Activated CD8-positive, alpha-beta memory T cell treated with anti-CD3 and anti-CD28 coated beads, Interleukin-2, amount 10 ng/mL, durations not matched to agents 7 days and 5 days (primary cell): ENCODE measurements at regions of chr11 and their contacts with region 1.

Region 1: DNA sequence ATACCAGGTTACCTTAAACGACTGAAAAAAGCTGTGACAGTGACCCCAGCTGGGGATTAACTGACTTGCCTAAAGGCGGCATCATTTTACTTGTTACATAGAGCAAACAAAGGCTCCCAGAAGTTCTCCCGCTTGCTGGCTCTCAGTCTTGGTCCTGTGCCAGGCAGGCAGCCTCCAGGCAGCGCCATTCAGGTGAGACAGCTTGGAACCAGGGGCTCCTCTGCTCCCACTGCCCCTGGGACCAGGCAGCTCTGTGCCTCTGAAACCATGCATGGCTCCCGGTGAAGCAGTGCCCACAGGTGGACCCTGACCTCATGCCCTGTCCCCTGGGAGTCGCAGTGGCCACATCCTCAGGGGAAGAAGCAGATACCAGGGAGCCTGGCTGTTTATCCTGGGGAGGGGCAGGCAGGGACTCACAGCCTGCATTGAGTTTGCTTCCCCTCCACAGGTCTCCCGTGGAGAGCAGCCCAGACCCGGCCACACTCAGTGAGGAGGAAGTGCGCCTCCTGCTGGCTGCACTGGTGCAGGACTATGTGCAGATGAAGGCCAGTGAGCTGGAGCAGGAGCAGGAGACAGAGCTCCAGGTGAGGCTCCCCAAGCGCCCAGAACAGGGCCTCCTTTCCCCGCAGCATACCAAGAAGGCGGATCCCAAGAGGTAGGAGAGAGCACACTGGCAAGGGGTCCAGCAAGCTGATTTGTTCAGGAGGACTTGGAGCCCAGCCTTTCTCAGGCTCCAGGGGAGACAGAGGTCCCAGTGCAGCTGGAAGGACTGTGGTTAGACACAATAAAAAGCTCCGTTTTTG is 15.6 kb upstream of the CYP2R1 start:
- DNase-seq: peak; percentile 89
- ATAC-seq: peak; percentile 58
- H3K4me3 Mint-ChIP-seq: no peak overlapping the region
- H3K27ac Mint-ChIP-seq: peak overlapping the region; percentile 69
- H3K4me1 Mint-ChIP-seq: peaks cover 50% of the 10 kb centered on the region
- H3K27me3 Mint-ChIP-seq: no peaks in the 10 kb centered on the region

Region 2: DNA sequence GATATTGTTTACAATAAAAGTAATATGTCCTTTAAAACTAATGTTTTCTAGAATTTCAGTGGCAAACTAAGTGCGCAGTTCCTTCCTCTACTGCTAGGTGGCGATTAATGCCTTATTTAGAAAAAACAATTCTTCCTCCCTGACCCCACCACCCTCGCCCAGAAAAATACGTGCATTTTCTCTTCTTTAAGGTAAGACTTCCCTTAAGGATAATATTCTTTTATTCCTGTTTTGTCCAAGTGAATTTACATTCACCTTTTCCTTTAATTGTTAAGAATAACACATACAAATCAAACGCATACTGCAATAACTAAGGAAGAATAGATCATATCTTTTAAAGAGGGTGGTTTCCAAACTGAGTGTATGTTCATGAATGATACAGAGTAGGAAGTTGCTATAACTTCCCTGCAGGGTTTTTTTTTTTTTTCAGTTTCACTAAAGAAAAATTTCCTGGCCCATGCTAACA is 370.4 kb before region 1 on chr11:
- CTCF ChIA-PET with region 1: interaction called, 20 read pairs
- DNase-seq: peak; percentile 65
- ATAC-seq: peak; percentile 77
- H3K4me3 Mint-ChIP-seq: peak overlapping the region; percentile 47
- H3K27ac Mint-ChIP-seq: peak overlapping the region; percentile 79
- H3K4me1 Mint-ChIP-seq: peaks cover 36% of the 10 kb centered on the region
- H3K27me3 Mint-ChIP-seq: no peaks in the 10 kb centered on the region

Region 3: GRCh38 chr11:14636119-14636518 is 271.5 kb before region 1 on chr11:
- CTCF ChIA-PET with region 1: interaction called, 18 read pairs
- DNase-seq: no peak
- ATAC-seq: no peak
- H3K4me3 Mint-ChIP-seq: no peak overlapping the region
- H3K27ac Mint-ChIP-seq: peak overlapping the region; percentile 59
- H3K4me1 Mint-ChIP-seq: peaks cover 61% of the 10 kb centered on the region
- H3K27me3 Mint-ChIP-seq: no peaks in the 10 kb centered on the region

Region 4: GRCh38 chr11:14789879-14790484 is 117.6 kb before region 1 on chr11:
- CTCF ChIA-PET with region 1: interaction called, 123 read pairs
- DNase-seq: no peak
- ATAC-seq: no peak
- H3K4me3 Mint-ChIP-seq: no peak overlapping the region
- H3K27ac Mint-ChIP-seq: no peak overlapping the region
- H3K4me1 Mint-ChIP-seq: peaks cover 9% of the 10 kb centered on the region
- H3K27me3 Mint-ChIP-seq: no peaks in the 10 kb centered on the region

Region 5: GRCh38 chr11:14861680-14862079 is 45.9 kb before region 1 on chr11:
- CTCF ChIA-PET with region 1: no interaction called
- DNase-seq: no peak
- ATAC-seq: no peak
- H3K4me3 Mint-ChIP-seq: no peak overlapping the region
- H3K27ac Mint-ChIP-seq: peak overlapping the region; percentile 25
- H3K4me1 Mint-ChIP-seq: peaks cover 4% of the 10 kb centered on the region
- H3K27me3 Mint-ChIP-seq: no peaks in the 10 kb centered on the region

Region 6: GRCh38 chr11:14974515-14975251 is 67.1 kb after region 1 on chr11:
- CTCF ChIA-PET with region 1: interaction called, 47 read pairs
- DNase-seq: peak; percentile 77
- ATAC-seq: peak; percentile 68
- H3K4me3 Mint-ChIP-seq: peak overlapping the region; percentile 50
- H3K27ac Mint-ChIP-seq: no peak overlapping the region
- H3K4me1 Mint-ChIP-seq: peaks cover 28% of the 10 kb centered on the region
- H3K27me3 Mint-ChIP-seq: peaks cover 77% of the 10 kb centered on the region

Region 7: GRCh38 chr11:15074206-15075161 is 166.9 kb after region 1 on chr11:
- CTCF ChIA-PET with region 1: interaction called, 187 read pairs
- DNase-seq: peak; percentile 91
- ATAC-seq: peak; percentile 89
- H3K4me3 Mint-ChIP-seq: peak overlapping the region; percentile 70
- H3K27ac Mint-ChIP-seq: peak overlapping the region; percentile 47
- H3K4me1 Mint-ChIP-seq: peaks cover 21% of the 10 kb centered on the region
- H3K27me3 Mint-ChIP-seq: peaks cover 30% of the 10 kb centered on the region

Region 8: DNA sequence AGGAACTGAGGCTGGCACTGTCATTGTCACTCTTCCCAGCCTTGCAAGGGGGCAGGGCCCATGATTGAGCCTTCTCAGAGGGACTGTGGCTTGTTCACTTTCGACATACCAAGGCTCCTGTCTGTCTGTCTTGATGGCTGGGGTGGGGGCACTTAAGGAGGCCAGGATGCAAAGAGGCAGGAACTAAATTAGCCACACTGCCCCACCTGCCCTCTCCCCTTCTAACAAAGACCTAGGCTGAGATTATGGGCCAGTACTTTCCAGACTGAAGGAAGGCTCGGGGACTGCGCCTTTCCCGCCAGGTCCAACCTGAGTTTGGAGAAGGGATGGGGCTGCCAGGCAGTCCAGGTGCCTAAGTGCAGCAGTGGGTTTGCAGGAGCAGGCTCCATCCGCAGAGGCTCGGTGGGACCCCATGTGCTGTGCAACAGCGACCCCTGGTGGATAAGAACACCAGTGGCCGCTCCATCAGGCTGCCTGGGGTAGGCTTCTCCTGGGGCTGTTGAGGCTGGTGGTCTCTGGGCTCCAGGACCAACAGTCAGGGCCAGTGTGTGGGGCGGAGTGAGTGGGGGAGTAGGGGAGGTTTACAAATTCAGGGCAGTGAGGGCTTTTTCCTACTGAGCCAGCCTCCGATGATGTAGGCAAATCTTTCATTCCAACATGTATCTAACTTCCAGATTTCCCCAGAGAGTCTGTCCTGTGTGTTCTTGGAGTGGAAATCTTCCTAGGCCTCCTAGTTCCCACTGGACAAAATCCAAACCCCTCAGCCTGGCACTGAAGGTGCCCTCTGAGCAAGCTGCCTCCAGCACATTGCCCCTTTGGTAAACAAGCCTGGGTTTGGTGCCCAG is 301.0 kb after region 1 on chr11:
- CTCF ChIA-PET with region 1: interaction called, 25 read pairs
- DNase-seq: peak; percentile 82
- ATAC-seq: peak; percentile 92
- H3K4me3 Mint-ChIP-seq: no peak overlapping the region
- H3K27ac Mint-ChIP-seq: no peak overlapping the region
- H3K4me1 Mint-ChIP-seq: no peaks in the 10 kb centered on the region
- H3K27me3 Mint-ChIP-seq: peaks cover 6% of the 10 kb centered on the region